Thyroid gland (tissue), 4 donors: ENCODE measurements at regions of chr1 and their contacts with region 1.

Region 1: DNA sequence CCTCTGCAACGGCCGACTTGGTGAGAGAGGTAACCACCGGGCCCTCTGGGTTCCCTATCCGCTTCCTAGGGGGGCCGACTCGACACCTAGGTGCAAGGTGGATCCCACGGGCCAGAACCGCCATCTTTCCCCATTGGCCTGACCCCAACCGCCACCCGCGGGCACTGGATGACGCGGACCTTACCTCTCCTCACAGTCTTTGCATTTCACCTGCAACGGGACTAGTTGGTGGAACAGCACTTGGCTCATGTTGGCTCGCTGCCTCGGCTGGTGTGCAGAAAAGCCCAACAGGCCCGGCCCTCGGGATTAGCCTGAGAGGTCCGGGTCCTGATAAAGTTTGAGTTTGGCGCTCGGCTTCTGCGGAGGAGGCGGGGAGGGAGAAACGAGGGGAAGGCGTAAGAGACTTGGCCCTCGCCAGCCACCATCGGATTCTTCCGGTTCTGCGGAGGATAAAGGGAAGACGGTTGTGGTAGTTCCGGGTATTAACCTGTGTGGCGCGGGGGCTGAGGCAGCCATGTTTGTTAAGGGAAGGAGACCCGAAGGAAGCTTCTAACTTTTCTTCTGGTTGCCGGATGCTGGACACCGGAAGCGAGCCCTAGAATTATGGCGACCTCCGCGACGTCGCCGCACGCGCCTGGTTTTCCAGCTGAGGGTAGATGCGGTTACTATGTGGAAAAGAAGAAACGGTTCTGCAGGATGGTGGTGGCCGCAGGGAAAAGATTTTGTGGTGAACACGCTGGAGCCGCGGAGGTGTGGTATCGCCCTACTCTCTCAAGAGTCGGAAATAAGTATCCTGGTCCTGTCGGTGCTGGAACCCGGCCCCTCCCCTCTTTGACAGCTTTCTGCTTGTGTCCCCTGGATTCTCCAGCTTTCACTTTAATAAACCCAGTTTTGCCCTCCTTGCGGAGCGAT is at the starts of genes SASS6 and TRMT13:
- DNase-seq: peak; percentile 97 to 98
- H3K4me3 ChIP-seq: peak within 1 kb of the TSS; percentile 42 to 76 (median 76)
- H3K27ac ChIP-seq: peak within 1 kb of the TSS in 2 of 3 donors; percentile 47 to 62
- H3K4me1 ChIP-seq: peaks cover 11 to 17% of the 10 kb centered on the region in 2 donors
- H3K27me3 ChIP-seq: no peaks in the 10 kb centered on the region
- CTCF ChIP-seq: peak in 1 of 6 experiments; percentile 36
- POLR2A ChIP-seq: peak in 1 of 2 donors; percentile 55
- total RNA-seq, gene SASS6: 2.6 to 4.6 (median 3.5) TPM
- total RNA-seq, gene TRMT13: 27.6 to 39.5 (median 36.1) TPM

Region 2: GRCh38 chr1:100087396-100087795 is 45.4 kb before region 1 on chr1:
- intact Hi-C with region 1: no loop called
- DNase-seq: no peak
- H3K4me3 ChIP-seq: no peak overlapping the region
- H3K27ac ChIP-seq: no peak overlapping the region
- H3K4me1 ChIP-seq: no peaks in the 10 kb centered on the region
- H3K27me3 ChIP-seq: no peaks in the 10 kb centered on the region
- CTCF ChIP-seq: no peak
- POLR2A ChIP-seq: no peak

Region 3: GRCh38 chr1:100265931-100266740 is 133.3 kb after region 1 on chr1 and contains the start of gene RTCA:
- intact Hi-C with region 1: loop called (anchors 10 kb)
- DNase-seq: peak; percentile 95 to 97
- H3K4me3 ChIP-seq: peak within 1 kb of the TSS; percentile 46 to 95 (median 88)
- H3K27ac ChIP-seq: peak within 1 kb of the TSS in 2 of 3 donors; percentile 71 to 83
- H3K4me1 ChIP-seq: peaks cover 0 to 16% of the 10 kb centered on the region in 2 donors
- H3K27me3 ChIP-seq: no peaks in the 10 kb centered on the region
- CTCF ChIP-seq: no peak
- POLR2A ChIP-seq: peak in 1 of 2 donors; percentile 78
- total RNA-seq, gene RTCA: 13.6 to 29.0 (median 21.1) TPM

Region 4: GRCh38 chr1:100360790-100361510 is 228.1 kb after region 1 on chr1:
- intact Hi-C with region 1: loop called (anchors 10 kb)
- DNase-seq: peak; percentile 82
- H3K4me3 ChIP-seq: no peak overlapping the region
- H3K27ac ChIP-seq: peak overlapping the region; percentile 56 to 64 (median 63)
- H3K4me1 ChIP-seq: peaks cover 34 to 41% of the 10 kb centered on the region in 2 donors
- H3K27me3 ChIP-seq: no peaks in the 10 kb centered on the region
- CTCF ChIP-seq: no peak
- POLR2A ChIP-seq: no peak